Aorta (tissue), 5 donors: ENCODE measurements at regions of chr1 and their contacts with region 1.

Region 1: DNA sequence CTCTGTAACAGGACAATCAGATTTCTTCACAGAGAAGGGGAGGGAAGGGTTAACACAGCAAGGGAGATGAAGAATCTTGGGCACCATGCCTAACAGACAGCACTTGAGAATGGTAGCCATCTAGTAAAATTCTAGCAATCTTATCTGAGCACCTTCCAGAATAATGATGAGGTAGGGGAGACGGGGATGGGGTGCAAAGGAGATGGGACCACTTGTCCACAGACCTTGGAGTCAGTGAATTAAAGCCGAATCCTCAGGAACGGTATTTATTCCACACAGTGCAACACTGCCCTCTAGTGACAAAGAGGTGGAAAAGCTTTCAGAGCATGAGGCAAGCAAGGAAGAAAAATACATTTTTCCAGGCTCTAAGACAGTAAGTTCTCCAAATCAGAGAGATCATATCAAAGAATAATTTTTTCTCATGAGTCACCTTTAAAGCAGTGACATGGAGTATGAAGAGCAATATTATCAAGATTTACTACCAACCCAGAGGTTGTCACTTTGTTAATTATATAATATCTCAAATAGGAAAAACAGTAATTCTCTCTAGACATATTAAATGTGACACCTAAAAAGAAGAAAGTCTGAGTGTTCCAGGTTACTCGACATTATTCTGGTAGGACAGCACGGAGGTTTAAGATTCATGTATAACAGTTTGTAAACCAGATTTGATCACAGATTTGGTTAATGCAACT is 43.3 kb upstream of the LPAR3 start:
- DNase-seq: no peak
- ATAC-seq: peak; percentile 88
- H3K4me3 ChIP-seq: peak overlapping the region in 1 of 2 donors; percentile 12
- H3K27ac ChIP-seq: no peak overlapping the region
- H3K4me1 ChIP-seq: no peaks in the 10 kb centered on the region
- H3K27me3 ChIP-seq: no peaks in the 10 kb centered on the region

Region 2: DNA sequence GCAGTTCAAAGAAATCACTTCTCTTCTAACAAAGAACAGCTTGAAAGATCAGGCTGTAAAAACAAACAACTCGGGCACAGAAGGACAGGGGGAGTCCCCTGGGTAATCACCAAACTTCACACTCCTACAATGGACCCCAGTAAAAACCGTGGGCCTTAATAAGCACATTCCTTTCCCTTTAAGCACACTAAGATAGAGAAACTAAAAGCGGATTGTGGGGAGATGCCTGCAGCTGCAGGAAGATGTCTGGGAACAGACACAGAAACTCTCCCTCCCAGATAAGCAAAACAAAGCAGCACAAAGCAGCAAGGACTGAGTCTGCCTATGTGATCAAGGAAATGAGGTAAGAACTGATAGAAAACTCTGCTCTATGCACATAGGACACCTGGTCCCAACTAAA is 324.5 kb before region 1 on chr1:
- intact Hi-C with region 1: no loop called
- DNase-seq: no peak
- ATAC-seq: no peak
- H3K4me3 ChIP-seq: no peak overlapping the region
- H3K27ac ChIP-seq: no peak overlapping the region
- H3K4me1 ChIP-seq: no peaks in the 10 kb centered on the region
- H3K27me3 ChIP-seq: no peaks in the 10 kb centered on the region

Region 3: GRCh38 chr1:84644472-84644871 is 291.8 kb before region 1 on chr1:
- intact Hi-C with region 1: loop called in 1 of 2 experiments (anchors 10 kb)
- DNase-seq: no peak
- ATAC-seq: no peak
- H3K4me3 ChIP-seq: no peak overlapping the region
- H3K27ac ChIP-seq: no peak overlapping the region
- H3K4me1 ChIP-seq: no peaks in the 10 kb centered on the region
- H3K27me3 ChIP-seq: no peaks in the 10 kb centered on the region